Activated CD4-positive, alpha-beta memory T cell treated with anti-CD3 and anti-CD28 coated beads for 36 hours (primary cell): ENCODE measurements at regions of chr17 and their contacts with region 1.

Region 1: DNA sequence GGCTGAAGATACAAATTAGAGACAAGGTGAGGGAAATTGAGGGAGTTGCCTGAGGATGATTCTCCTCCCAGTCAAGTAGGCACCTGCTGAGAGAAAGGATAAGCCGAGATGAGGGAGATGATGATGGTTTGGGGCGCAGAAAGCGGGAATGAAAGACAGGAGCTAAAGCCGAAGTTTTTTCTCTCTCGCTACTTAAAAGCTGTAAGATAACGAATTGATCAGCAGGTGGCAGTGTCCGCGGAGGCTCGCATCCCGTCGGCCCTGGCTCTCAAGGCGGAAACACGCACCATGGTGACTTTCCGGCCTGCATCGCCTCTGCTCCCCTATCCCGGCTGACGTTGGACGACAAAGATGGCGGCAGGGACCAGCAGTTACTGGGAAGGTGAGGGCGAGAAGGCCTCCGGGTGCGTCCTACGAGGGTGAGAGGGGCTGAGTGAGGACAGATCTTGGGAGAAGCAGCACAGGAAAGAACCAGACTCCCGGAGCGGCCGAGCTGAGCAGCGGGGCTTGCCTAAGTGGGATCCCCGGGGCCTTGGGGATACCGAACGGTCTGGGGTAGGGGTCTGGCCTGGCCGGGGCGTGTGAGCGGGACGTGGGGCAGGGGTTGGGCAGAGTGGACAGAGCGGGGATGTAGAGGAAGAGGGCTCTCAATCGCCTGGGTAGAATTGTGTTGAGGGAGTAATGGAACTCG is at the start of gene GOSR1:
- DNase-seq: peak; percentile 96
- H3K4me3 Mint-ChIP-seq: peak within 1 kb of the TSS; percentile 94
- H3K27ac Mint-ChIP-seq: peak within 1 kb of the TSS; percentile 94
- H3K4me1 Mint-ChIP-seq: peaks cover 34% of the 10 kb centered on the region
- H3K27me3 Mint-ChIP-seq: peaks cover 2% of the 10 kb centered on the region
- total RNA-seq, gene GOSR1: 39.0 to 39.9 TPM

Region 2: DNA sequence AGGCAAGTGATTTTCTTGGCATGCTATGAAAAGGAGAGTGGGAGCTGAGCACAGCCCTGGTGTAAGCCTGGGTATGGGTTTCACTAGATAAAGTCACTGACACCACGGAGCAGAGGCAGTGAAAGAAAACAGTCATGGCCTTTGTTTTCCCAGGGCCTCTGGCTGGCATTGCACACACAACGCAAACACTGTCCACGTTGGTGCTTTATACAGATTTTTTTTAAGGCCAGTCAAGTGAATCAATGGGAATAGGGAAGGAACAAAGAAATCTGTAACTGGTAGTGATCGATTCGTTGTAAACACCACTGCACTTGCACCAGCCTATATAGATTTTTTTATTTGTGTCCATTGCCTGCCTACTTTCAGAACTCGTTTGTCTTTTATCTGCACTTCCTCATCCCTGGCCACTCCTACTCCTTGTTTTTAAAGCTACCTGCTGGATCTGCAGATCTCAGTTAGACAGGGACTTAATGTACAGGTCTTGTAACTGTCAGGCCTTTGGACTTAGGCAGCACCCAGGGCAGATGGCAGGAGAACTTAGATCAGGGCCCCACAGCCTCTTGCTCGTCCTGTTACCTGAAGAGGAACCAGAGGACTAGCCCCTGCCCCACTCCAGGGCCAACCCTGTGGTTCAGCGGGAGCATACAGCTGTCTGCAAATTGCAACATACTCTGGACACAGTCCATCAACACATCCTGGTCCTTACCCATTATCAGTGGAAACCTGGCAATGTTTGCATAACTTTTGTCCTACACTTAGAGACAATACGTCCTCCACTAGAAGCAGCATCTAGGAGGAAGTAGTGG is 132.7 kb before region 1 on chr17:
- CTCF ChIA-PET with region 1: interaction called, 20 read pairs
- POLR2A ChIA-PET with region 1: interaction called, 3 read pairs
- intact Hi-C with region 1: loop called (anchors 2 kb)
- DNase-seq: no peak
- H3K4me3 Mint-ChIP-seq: no peak overlapping the region
- H3K27ac Mint-ChIP-seq: no peak overlapping the region
- H3K4me1 Mint-ChIP-seq: peaks cover 18% of the 10 kb centered on the region
- H3K27me3 Mint-ChIP-seq: no peaks in the 10 kb centered on the region

Region 3: GRCh38 chr17:30378824-30379302 is 98.4 kb before region 1 on chr17 and contains the start of gene CPD:
- CTCF ChIA-PET with region 1: interaction called, 7 read pairs
- POLR2A ChIA-PET with region 1: no interaction called
- intact Hi-C with region 1: loop called (anchors 2 kb)
- DNase-seq: peak; percentile 98
- H3K4me3 Mint-ChIP-seq: peak within 1 kb of the TSS; percentile 82
- H3K27ac Mint-ChIP-seq: peak within 1 kb of the TSS; percentile 75
- H3K4me1 Mint-ChIP-seq: peaks cover 65% of the 10 kb centered on the region
- H3K27me3 Mint-ChIP-seq: no peaks in the 10 kb centered on the region
- total RNA-seq, gene CPD: 34.1 to 34.3 TPM

Region 4: DNA sequence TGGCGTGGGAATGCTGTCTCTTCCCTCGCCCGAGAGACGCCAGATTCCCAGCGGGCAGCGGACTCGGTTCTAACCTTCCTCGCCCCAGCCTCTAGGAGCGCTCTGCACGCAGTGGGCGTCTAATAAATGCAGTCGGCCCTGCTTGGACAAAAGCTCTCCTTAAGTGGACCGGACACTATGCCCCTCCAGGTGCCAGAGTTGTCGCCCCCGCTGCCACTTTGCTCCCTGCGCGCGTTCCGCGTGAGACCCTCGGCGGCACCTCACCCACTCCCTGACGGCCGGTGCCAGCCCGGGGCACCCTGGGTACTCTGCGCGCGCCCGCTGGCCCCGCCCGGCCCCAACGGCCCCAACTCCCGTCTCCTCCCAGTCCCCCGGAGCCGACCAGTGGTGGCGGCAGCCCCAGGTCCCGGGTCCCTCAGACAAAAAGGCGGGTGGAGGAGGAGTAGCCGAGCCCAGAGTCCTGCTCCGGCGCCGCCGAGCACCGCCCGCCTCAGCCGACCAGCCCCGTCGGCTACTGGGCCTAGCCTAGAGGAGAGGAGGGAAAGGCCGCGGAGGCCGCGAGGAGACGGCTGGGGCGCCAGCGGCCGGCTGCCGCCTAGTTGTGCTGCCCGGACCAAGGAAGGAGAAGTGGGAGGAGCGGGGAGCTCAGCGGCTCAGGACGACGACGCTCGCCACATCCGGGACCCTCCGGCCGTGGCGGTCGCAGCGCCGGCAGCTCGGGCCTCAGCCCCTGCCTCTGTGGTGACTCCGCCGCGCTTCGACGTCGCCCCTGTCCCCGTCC is 123.0 kb after region 1 on chr17:
- CTCF ChIA-PET with region 1: interaction called, 3 read pairs
- POLR2A ChIA-PET with region 1: no interaction called
- intact Hi-C with region 1: loop called (anchors 2 kb)
- DNase-seq: peak; percentile 83
- H3K4me3 Mint-ChIP-seq: peak overlapping the region; percentile 97
- H3K27ac Mint-ChIP-seq: no peak overlapping the region
- H3K4me1 Mint-ChIP-seq: peaks cover 12% of the 10 kb centered on the region
- H3K27me3 Mint-ChIP-seq: no peaks in the 10 kb centered on the region

Region 5: DNA sequence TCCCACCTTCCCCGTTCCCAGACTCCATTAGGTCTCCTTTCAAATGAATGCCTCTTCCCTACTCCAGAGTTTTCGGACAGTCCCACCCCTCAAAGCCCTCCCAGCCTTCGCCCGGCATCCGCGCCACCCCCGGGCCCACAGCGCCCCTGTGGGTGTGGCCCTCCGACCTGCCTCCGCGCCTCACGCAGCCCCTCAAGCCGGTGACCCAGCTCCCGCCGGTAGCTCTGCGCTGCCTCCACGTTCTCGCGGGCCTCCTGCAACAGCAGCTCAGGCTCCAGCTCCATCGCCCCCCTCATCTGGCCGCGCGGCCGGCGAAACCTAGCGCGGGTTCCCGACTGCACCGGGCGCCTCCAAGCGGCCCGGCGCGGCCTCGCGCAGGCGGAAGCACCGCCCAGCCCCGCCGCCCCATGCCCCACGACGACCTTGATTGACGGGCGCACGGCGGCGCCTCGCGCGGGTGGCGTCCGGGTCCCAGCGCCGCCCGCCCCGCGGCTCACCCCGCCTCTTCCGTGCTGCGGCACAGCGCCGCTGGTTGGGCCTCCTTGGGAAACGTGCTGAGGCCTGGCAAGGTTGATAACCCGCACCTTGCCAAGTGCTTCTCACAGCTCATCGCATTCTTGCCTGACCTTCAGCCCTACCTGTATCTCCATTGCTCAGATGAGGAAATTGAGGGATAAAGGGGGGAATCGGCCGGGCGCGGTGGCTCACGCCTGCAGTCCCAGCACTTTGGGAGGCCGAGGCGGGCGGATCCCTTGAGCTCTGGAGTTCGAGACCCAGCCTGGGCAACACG is 347.3 kb after region 1 on chr17 and contains the start of gene CRLF3:
- CTCF ChIA-PET with region 1: interaction called, 10 read pairs
- POLR2A ChIA-PET with region 1: no interaction called
- intact Hi-C with region 1: loop called (anchors 1 kb)
- DNase-seq: peak; percentile 94
- H3K4me3 Mint-ChIP-seq: peak within 1 kb of the TSS; percentile 91
- H3K27ac Mint-ChIP-seq: peak within 1 kb of the TSS; percentile 86
- H3K4me1 Mint-ChIP-seq: peaks cover 38% of the 10 kb centered on the region
- H3K27me3 Mint-ChIP-seq: no peaks in the 10 kb centered on the region
- total RNA-seq, gene CRLF3: 48.1 to 48.5 TPM